ENCODE measurements at regions of chr3 and their contacts with region 1.

Region 1: GRCh38 chr3:20361000-20361399 is 175.0 kb upstream of the SGO1 start:
- DNase-seq: no peak
- H3K4me3 ChIP-seq: no peak overlapping the region
- H3K4me3 Mint-ChIP-seq: no peak overlapping the region
- H3K27ac Mint-ChIP-seq: no peak overlapping the region
- H3K4me1 ChIP-seq: no peaks in the 10 kb centered on the region
- H3K4me1 Mint-ChIP-seq: peaks cover 11% of the 10 kb centered on the region
- H3K27me3 ChIP-seq: no peaks in the 10 kb centered on the region
- H3K27me3 Mint-ChIP-seq: no peaks in the 10 kb centered on the region
- CTCF ChIP-seq: no peak

Region 2: DNA sequence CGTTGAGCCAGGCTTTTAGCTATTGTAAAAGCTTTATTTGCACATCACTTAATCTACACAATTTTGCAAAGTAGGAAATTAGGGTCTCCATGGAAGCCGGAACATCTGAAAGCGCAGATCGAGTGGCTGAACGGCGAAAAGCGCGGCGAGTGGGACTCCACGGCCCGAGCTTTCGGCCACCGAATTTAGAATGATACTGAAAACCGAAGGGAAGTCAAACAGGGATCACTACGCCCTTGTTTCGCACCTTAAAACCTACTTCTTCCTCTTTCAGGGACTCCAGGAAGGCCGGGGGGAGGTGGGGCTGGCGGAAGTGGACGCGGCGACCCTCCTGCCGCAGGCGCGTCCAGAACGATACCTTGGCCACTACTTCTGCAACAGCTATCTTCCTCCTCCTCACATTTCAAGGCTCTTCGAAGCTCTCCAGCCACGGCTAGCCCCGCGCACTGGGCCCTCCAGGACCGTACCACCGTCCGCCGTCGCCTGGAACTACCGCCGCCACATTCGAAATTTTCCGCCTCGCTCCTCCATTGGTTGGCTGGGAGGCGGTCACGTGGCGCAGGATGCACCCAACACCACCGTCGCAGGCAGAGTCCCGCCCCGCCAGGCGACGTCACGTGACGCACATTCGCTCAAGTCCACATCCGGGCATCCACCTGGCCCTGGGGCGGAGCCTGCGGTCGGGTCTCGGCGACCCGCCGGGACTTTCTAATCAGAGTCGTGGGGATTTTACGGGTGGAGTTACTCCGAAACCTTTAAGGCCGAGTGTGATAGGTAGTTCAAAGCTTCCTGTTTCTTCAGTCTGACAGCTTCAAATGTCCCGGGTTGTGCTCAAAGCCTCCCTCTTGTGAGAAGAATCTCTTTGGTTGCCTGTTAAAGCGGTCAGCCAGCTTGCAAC is 175.1 kb before region 1 on chr3 and contains the start of gene SGO1:
- CTCF ChIA-PET with region 1: no interaction called
- POLR2A ChIA-PET with region 1: interaction called, 11 read pairs
- intact Hi-C with region 1: no loop called
- DNase-seq: peak; percentile 98
- H3K4me3 ChIP-seq: peak within 1 kb of the TSS; percentile 92
- H3K4me3 Mint-ChIP-seq: no peak within 1 kb of the TSS
- H3K27ac Mint-ChIP-seq: no peak within 1 kb of the TSS
- H3K4me1 ChIP-seq: peaks cover 5% of the 10 kb centered on the region; the same call in 1 of the 2 replicates
- H3K4me1 Mint-ChIP-seq: no peaks in the 10 kb centered on the region
- H3K27me3 ChIP-seq: no peaks in the 10 kb centered on the region
- H3K27me3 Mint-ChIP-seq: no peaks in the 10 kb centered on the region
- CTCF ChIP-seq: no peak
- total RNA-seq, gene SGO1: 24.2 and 27.2 TPM in 2 replicates